ENCODE measurements at regions of chr19 and their contacts with region 1.

Region 1: GRCh38 chr19:40090241-40091204 is at the start of gene ZNF780A:
- DNase-seq: peak; percentile 87
- H3K4me3 Mint-ChIP-seq: peak within 1 kb of the TSS; percentile 100
- H3K27ac Mint-ChIP-seq: peak within 1 kb of the TSS; percentile 99
- H3K4me1 Mint-ChIP-seq: peaks cover 37% of the 10 kb centered on the region
- H3K27me3 Mint-ChIP-seq: peaks cover 2% of the 10 kb centered on the region
- total RNA-seq, gene ZNF780A: 17.2 to 17.3 TPM

Region 2: GRCh38 chr19:39996811-39997594 is 93.5 kb before region 1 on chr19 and contains the start of gene ZNF546:
- CTCF ChIA-PET with region 1: interaction called, 3 read pairs
- POLR2A ChIA-PET with region 1: interaction called, 6 read pairs
- intact Hi-C with region 1: loop called (anchors 2 kb)
- DNase-seq: peak; percentile 95
- H3K4me3 Mint-ChIP-seq: peak within 1 kb of the TSS; percentile 98
- H3K27ac Mint-ChIP-seq: peak within 1 kb of the TSS; percentile 95
- H3K4me1 Mint-ChIP-seq: peaks cover 36% of the 10 kb centered on the region
- H3K27me3 Mint-ChIP-seq: no peaks in the 10 kb centered on the region
- total RNA-seq, gene ZNF546: 4.2 to 5.5 TPM

Region 3: DNA sequence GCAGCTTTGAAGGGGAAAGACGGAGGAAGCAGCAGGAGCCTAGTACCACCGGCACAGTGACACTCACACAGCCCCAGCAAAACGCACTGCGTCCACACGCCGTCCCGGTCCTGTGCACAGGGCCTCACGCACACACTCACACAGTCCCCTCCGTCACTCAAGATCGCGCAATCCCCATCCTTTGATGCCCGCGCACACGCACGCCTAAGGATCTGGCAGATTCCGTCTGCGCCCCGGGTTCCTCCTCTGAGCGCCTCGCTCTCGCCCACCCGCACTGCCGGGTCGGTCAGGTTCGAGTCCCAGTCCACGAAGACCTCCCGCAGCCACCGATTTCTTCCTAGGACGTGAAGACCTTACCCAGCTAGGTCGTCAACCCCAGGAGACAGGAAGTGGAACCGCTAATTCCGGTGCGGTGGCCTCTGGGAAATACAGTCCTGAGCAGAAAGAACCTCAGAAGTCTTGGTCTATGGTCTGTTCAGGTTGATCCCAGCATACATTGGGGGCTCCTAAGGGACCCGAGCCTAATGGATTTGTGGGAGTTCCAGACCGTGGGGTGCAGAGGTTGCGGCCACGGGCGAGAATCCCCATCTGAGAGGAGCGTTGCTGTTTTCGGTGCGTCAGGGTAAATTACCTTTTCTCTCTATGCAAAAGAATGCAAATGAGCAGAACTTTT is 34.6 kb before region 1 on chr19 and contains the start of gene ZNF780B:
- CTCF ChIA-PET with region 1: no interaction called
- POLR2A ChIA-PET with region 1: no interaction called
- intact Hi-C with region 1: loop called (anchors 2 kb)
- DNase-seq: peak; percentile 85
- H3K4me3 Mint-ChIP-seq: peak within 1 kb of the TSS; percentile 99
- H3K27ac Mint-ChIP-seq: peak within 1 kb of the TSS; percentile 93
- H3K4me1 Mint-ChIP-seq: peaks cover 38% of the 10 kb centered on the region
- H3K27me3 Mint-ChIP-seq: peaks cover 1% of the 10 kb centered on the region
- total RNA-seq, gene ZNF780B: 11.8 to 13.9 TPM

Region 4: GRCh38 chr19:40190891-40191835 is 100.6 kb after region 1 on chr19 and contains the start of gene MAP3K10:
- CTCF ChIA-PET with region 1: no interaction called
- POLR2A ChIA-PET with region 1: no interaction called
- intact Hi-C with region 1: loop called (anchors 5 kb)
- DNase-seq: peak; percentile 83
- H3K4me3 Mint-ChIP-seq: peak within 1 kb of the TSS; percentile 84
- H3K27ac Mint-ChIP-seq: peak within 1 kb of the TSS; percentile 89
- H3K4me1 Mint-ChIP-seq: peaks cover 20% of the 10 kb centered on the region
- H3K27me3 Mint-ChIP-seq: no peaks in the 10 kb centered on the region
- total RNA-seq, gene MAP3K10: 10.9 to 11.0 TPM